H1 (cell line): ENCODE measurements at regions of chr2 and their contacts with region 1.

Region 1: GRCh38 chr2:129748653-129749052 is 230.8 kb upstream of the RAB6C start:
- DNase-seq: peak in 1 of 2 experiments; percentile 19
- H3K4me3 ChIP-seq: no peak overlapping the region
- H3K27ac ChIP-seq: no peak overlapping the region
- H3K4me1 ChIP-seq: peaks cover 0 to 2% (median 0%) of the 10 kb centered on the region in 4 experiments; a peak in 1 of 7 replicates
- H3K27me3 ChIP-seq: no peaks in the 10 kb centered on the region
- CTCF ChIP-seq: peak; percentile 27 to 69 (median 67)
- EP300 ChIP-seq: no peak
- POLR2A ChIP-seq: no peak
- RAD21 ChIP-seq: peak; percentile 80 to 91

Region 2: GRCh38 chr2:129587426-129588064 is 161.1 kb before region 1 on chr2:
- CTCF ChIA-PET with region 1: interaction called, 17 read pairs
- POLR2A ChIA-PET with region 1: no interaction called
- DNase-seq: peak; percentile 44 to 87
- H3K4me3 ChIP-seq: no peak overlapping the region
- H3K27ac ChIP-seq: no peak overlapping the region
- H3K4me1 ChIP-seq: no peaks in the 10 kb centered on the region; a peak in 1 of 7 replicates
- H3K27me3 ChIP-seq: peaks cover 0 to 16% (median 9%) of the 10 kb centered on the region in 4 experiments; a peak in 6 of 7 replicates
- CTCF ChIP-seq: peak; percentile 73 to 90 (median 78)
- EP300 ChIP-seq: no peak
- POLR2A ChIP-seq: no peak
- RAD21 ChIP-seq: peak; percentile 55 to 64

Region 3: DNA sequence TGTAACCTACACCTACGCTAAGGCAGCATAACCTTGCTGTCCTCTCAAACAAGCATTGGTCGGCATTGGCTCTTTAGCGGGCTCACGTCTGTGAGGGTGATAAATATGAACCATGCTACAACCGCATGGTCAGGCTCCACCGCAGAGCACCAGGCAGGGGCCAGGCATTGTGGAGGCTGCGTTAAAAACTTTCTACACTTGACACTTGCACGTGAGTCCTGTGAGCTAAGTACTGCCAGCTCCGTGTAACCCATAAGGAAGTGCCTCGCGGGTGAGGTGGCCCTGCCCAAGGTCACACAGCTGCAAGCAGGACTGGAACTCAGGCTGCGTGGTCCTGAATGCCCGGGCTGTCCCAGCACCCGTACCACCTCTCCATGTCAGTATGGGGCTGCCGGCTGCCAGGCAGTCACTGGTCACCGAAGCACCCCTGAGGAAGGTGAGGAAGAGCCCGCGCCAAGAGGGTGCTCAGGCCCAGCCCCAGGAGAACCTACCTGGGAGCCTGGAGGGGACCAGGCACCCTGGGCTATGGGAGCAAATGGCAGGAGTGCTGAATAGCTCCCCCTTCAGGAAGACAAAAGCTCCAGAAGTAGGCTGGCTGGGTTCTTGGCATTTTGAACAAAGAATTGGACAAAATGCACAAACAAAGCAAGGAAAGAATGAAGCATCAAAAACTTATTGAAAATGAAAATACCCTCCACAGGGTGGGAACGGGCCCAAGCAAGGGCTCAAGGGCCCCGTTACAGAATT is 40.3 kb before region 1 on chr2:
- CTCF ChIA-PET with region 1: interaction called, 11 read pairs
- POLR2A ChIA-PET with region 1: no interaction called
- DNase-seq: peak in 1 of 2 experiments; percentile 35
- H3K4me3 ChIP-seq: no peak overlapping the region
- H3K27ac ChIP-seq: no peak overlapping the region
- H3K4me1 ChIP-seq: peaks cover 2 to 16% (median 10%) of the 10 kb centered on the region in 4 experiments
- H3K27me3 ChIP-seq: no peaks in the 10 kb centered on the region; a peak in 1 of 7 replicates
- CTCF ChIP-seq: peak; percentile 16 to 45 (median 33); a peak in 3 of 4 replicates
- EP300 ChIP-seq: no peak
- POLR2A ChIP-seq: no peak
- RAD21 ChIP-seq: peak in 1 of 2 experiments; percentile 40; a peak in 2 of 4 replicates

Region 4: DNA sequence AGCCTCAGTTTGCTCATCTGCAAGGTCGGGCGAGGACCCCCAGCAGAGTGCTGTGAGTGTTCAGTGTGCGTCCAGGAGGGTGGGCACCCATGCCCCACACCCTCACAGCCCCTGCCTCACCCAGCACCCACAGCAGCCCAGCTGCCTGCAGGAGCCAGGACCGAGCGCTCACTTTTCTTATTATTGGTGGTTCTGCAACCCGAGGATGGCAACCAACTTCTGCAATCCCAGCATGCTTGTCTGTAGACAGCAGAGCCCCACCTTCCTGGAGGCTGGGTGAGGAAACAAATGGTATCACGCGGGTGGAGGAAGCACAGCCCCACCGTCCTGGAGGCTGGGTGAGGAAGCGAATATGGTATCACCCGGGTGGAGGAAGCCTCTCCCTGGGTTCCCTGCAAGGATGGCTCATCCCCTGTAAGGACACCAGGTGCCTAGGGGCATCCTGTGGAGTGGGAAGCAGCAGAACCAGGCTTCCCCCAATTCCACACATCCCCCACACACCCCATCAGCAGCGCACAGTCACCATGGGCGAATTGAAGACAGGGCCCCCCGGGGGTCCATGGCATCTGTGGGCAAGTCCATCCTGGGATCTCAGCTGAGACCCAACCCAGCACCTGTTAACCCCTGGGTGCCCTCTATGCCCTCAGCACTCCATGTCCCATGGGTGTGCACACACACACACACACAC is 10.3 kb after region 1 on chr2:
- CTCF ChIA-PET with region 1: interaction called, 12 read pairs
- POLR2A ChIA-PET with region 1: interaction called, 6 read pairs
- DNase-seq: no peak
- H3K4me3 ChIP-seq: peak overlapping the region in 1 of 4 experiments; percentile 37; a peak in 1 of 8 replicates
- H3K27ac ChIP-seq: no peak overlapping the region; the same call in 1 of the 2 replicates
- H3K4me1 ChIP-seq: peaks cover 5 to 17% (median 12%) of the 10 kb centered on the region in 4 experiments
- H3K27me3 ChIP-seq: no peaks in the 10 kb centered on the region; a peak in 1 of 7 replicates
- CTCF ChIP-seq: no peak
- EP300 ChIP-seq: no peak
- POLR2A ChIP-seq: no peak
- RAD21 ChIP-seq: no peak

Region 5: GRCh38 chr2:129765678-129766351 is 17.2 kb after region 1 on chr2:
- CTCF ChIA-PET with region 1: interaction called, 18 read pairs
- POLR2A ChIA-PET with region 1: interaction called, 3 read pairs
- DNase-seq: no peak
- H3K4me3 ChIP-seq: no peak overlapping the region
- H3K27ac ChIP-seq: no peak overlapping the region
- H3K4me1 ChIP-seq: peaks cover 0 to 6% (median 0%) of the 10 kb centered on the region in 4 experiments; a peak in 2 of 7 replicates
- H3K27me3 ChIP-seq: no peaks in the 10 kb centered on the region
- CTCF ChIP-seq: no peak
- EP300 ChIP-seq: no peak
- POLR2A ChIP-seq: no peak
- RAD21 ChIP-seq: no peak

Region 6: DNA sequence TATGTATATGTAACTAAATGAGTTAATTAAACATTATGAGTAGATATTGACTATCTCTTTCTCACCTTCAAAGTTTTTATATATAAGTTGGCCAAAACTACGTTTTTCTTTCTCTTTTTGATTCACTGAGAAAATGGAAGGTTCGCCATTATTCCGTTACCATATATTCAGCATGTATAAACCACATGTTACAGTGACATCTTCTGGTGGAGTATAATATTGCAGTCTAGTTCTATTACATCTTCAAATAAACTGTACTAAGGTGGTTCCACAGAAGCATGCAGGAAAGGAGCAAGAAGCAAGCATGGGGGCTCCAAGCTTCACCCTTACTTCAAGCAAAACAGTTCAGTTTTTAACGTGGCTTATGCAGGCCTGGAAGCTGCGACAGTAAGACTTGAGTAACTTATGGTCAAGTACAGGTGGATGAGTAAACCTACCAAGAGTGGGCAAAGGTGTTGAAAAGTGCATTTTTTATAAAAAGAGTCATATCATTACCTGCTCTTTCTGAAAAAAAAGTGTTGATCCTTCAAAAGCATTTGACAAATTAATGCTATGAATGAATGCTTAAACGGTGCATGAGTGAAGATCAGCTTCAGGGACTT is 101.0 kb after region 1 on chr2:
- CTCF ChIA-PET with region 1: interaction called, 11 read pairs
- POLR2A ChIA-PET with region 1: no interaction called
- DNase-seq: no peak
- H3K4me3 ChIP-seq: no peak overlapping the region
- H3K27ac ChIP-seq: no peak overlapping the region
- H3K4me1 ChIP-seq: no peaks in the 10 kb centered on the region
- H3K27me3 ChIP-seq: no peaks in the 10 kb centered on the region; a peak in 1 of 7 replicates
- CTCF ChIP-seq: peak in 2 of 3 experiments; percentile 34 to 62; a peak in 2 of 4 replicates
- EP300 ChIP-seq: no peak
- POLR2A ChIP-seq: no peak
- RAD21 ChIP-seq: peak; percentile 76 to 85